Calu3 (cell line): ENCODE measurements at regions of chr1 and their contacts with region 1.

Region 1: GRCh38 chr1:58768971-58769808 is 14.7 kb downstream of the JUN start:
- DNase-seq: peak; percentile 81
- H3K4me3 Mint-ChIP-seq: no peak overlapping the region
- H3K27ac Mint-ChIP-seq: no peak overlapping the region
- H3K4me1 Mint-ChIP-seq: peaks cover 24% of the 10 kb centered on the region
- H3K27me3 Mint-ChIP-seq: no peaks in the 10 kb centered on the region
- CTCF ChIP-seq: peak; percentile 71

Region 2: DNA sequence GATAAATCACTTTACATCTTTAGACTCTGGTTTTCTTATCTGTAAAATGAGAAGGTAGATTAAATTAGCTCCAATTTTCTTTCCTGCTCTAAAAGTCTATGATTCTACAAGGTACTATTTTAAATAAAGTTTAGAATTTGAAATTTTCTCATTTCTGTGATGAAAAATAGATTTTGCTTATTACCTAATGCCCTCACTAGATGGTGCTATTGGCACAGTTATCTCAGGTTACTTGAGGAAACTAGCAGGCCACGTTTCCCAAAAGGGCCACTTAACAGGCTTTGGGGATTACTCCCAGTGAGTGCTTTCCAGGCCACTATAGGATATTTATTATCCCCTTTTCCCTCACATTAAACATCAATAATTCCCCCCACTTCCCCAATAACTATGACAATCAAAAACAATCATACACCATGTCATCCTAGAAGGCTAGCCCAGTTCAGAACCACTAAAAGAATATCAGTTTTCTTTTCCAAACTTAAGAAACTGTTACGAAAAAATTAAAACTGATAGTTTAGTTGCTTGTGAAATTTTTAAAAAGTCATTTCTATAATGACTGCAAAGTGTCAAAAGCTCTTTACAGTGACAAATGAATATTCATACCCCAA is 253.3 kb before region 1 on chr1:
- CTCF ChIA-PET with region 1: no interaction called
- intact Hi-C with region 1: loop called (anchors 1 kb)
- DNase-seq: peak; percentile 39
- H3K4me3 Mint-ChIP-seq: no peak overlapping the region
- H3K27ac Mint-ChIP-seq: no peak overlapping the region
- H3K4me1 Mint-ChIP-seq: no peaks in the 10 kb centered on the region
- H3K27me3 Mint-ChIP-seq: no peaks in the 10 kb centered on the region
- CTCF ChIP-seq: peak; percentile 54

Region 3: GRCh38 chr1:58739856-58740466 is 29.2 kb before region 1 on chr1:
- CTCF ChIA-PET with region 1: no interaction called
- intact Hi-C with region 1: loop called (anchors 1 kb)
- DNase-seq: peak; percentile 46
- H3K4me3 Mint-ChIP-seq: no peak overlapping the region
- H3K27ac Mint-ChIP-seq: no peak overlapping the region
- H3K4me1 Mint-ChIP-seq: no peaks in the 10 kb centered on the region
- H3K27me3 Mint-ChIP-seq: no peaks in the 10 kb centered on the region
- CTCF ChIP-seq: peak; percentile 74